ENCODE measurements at regions of chr18 and their contacts with region 1.

Region 1: DNA sequence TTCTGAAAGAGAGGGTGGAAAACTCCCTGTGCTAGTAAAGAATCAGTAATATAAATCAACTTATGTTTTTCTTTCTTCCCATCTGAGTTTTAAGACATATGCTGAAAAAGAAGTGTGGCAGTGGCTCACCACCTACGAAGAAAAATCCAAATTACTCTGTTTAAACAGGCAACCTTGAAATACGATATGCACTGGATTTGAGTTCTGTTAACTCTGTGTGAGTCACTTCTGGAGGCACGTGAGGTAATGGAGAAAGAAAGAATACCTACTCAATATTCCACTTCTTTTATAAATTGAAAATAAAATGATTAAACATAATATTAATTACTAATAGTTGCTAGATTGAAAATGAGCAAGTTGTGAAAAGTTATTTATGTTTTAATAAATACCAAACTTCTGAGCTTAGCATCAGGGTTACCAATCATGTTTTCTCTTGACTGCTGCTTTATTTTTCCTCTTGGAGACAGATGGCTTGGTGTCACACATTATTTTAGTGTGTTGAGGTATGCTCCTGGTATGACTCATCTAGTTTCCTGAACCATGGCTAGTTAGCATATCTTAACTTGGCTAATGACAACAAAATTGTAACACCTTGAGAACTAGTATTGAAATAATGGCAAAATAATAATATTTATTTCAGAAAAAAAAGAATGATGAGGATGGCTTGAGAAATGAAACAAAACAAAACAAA is 1705.5 kb upstream of the PIK3C3 start:
- DNase-seq: no peak
- ATAC-seq: no peak
- H3K4me3 ChIP-seq: no peak overlapping the region
- H3K27ac ChIP-seq: no peak overlapping the region
- H3K4me1 ChIP-seq: no peaks in the 10 kb centered on the region
- H3K27me3 ChIP-seq: no peaks in the 10 kb centered on the region
- CTCF ChIP-seq: no peak

Region 2: GRCh38 chr18:41587976-41588375 is 1338.4 kb after region 1 on chr18:
- intact Hi-C with region 1: loop called in 1 of 2 experiments (anchors 10 kb)
- DNase-seq: no peak
- ATAC-seq: no peak
- H3K4me3 ChIP-seq: no peak overlapping the region
- H3K27ac ChIP-seq: no peak overlapping the region
- H3K4me1 ChIP-seq: no peaks in the 10 kb centered on the region
- H3K27me3 ChIP-seq: no peaks in the 10 kb centered on the region
- CTCF ChIP-seq: no peak

Measured in psoas muscle (tissue), 8 donors.